ENCODE measurements at regions of chr18 and their contacts with region 1.

Region 1: DNA sequence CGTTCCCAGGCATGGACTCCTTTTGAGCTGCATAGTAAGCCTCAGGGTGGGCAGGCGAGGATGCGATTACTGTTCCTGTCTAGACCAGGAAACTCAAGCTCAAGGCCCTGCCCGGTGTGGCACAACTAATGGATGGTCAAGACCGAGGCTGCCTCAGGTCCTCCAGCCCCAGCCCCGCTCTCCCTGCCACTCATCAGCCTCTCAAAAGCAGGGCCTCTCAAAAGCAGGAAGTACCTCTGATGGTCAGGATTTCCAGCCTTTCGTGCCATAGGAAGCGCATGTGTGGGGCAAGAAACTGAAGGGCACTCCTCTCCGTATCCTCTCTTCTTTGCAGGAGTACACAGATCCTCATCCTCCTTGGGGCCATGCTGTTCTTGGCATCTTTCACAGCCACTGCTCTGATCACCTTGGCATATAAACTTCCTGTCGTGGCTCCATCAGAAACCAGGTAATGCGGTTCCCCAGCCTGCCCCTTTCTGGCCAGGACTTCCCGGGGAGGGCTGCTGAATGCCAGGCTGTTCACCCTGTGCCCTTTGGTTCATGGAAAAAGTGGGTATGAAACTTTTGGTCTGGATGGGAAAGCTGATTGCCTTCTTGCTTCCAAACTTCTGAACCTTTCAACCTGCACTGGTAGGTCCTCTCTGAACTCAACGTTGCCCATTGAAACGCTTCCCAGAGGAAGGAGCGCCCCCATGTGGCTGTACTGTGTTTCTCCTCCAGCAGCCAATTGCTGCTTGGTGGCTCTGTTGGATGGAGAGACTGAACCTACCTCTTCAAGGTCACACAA is 82.8 kb upstream of the SEC11C start:
- DNase-seq: peak; percentile 78 to 85 (median 80)
- ATAC-seq: peak in 3 of 4 donors; percentile 68 to 74 (median 69)
- H3K4me3 ChIP-seq: no peak overlapping the region
- H3K27ac ChIP-seq: no peak overlapping the region
- H3K4me1 ChIP-seq: peaks cover 0 to 26% (median 6%) of the 10 kb centered on the region in 12 donors
- H3K27me3 ChIP-seq: no peaks in the 10 kb centered on the region
- CTCF ChIP-seq: peak in 11 of 12 donors; percentile 58 to 93 (median 80)
- POLR2A ChIP-seq: no peak

Region 2: GRCh38 chr18:58788971-58789875 is 267.7 kb before region 1 on chr18:
- intact Hi-C with region 1: loop called in 3 of 10 experiments (anchors 2 to 5 kb)
- DNase-seq: peak; percentile 68 to 77 (median 69)
- ATAC-seq: peak in 3 of 4 donors; percentile 67 to 77 (median 68)
- H3K4me3 ChIP-seq: no peak overlapping the region
- H3K27ac ChIP-seq: peak overlapping the region; percentile 5 to 76 (median 72)
- H3K4me1 ChIP-seq: peaks cover 0 to 44% (median 27%) of the 10 kb centered on the region in 12 donors
- H3K27me3 ChIP-seq: no peaks in the 10 kb centered on the region
- CTCF ChIP-seq: no peak
- POLR2A ChIP-seq: no peak

Region 3: GRCh38 chr18:58864146-58865032 is 192.5 kb before region 1 on chr18 and contains the start of gene ZNF532:
- intact Hi-C with region 1: loop called in 2 of 10 experiments (anchors 10 kb)
- DNase-seq: peak in 3 of 5 donors; percentile 51 to 60 (median 57)
- ATAC-seq: peak; percentile 46 to 73 (median 56)
- H3K4me3 ChIP-seq: peak within 1 kb of the TSS; percentile 29 to 76 (median 55)
- H3K27ac ChIP-seq: peak within 1 kb of the TSS; percentile 92 to 100 (median 98)
- H3K4me1 ChIP-seq: peaks cover 21 to 93% (median 77%) of the 10 kb centered on the region in 12 donors
- H3K27me3 ChIP-seq: no peaks in the 10 kb centered on the region
- CTCF ChIP-seq: no peak
- POLR2A ChIP-seq: no peak
- total RNA-seq, gene ZNF532: 50.7 to 84.4 (median 70.9) TPM

Region 4: DNA sequence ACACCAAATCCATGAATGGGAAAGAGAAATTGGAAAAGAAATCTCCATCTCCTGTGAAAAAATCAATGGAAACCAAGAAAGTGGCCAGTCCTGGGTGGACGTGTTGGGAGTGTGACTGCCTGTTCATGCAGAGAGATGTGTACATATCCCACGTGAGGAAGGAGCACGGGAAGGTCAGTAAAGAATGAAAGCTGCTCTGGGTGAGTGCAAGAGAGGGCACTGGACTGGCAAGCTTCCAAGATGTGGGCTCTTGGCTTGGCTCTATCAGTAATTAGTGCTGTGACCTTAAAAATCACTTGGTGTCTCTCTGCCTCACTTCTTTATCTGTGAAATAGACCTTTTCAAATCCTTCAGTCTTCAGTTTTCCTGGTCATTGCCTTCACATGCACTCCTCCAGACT is 103.3 kb before region 1 on chr18:
- intact Hi-C with region 1: loop called in 1 of 10 experiments (anchors 5 kb)
- DNase-seq: peak in 4 of 5 donors; percentile 70 to 83 (median 76)
- ATAC-seq: peak; percentile 88 to 95 (median 94)
- H3K4me3 ChIP-seq: no peak overlapping the region
- H3K27ac ChIP-seq: peak overlapping the region in 5 of 12 donors; percentile 8 to 68 (median 43)
- H3K4me1 ChIP-seq: peaks cover 0 to 34% (median 9%) of the 10 kb centered on the region in 12 donors
- H3K27me3 ChIP-seq: no peaks in the 10 kb centered on the region
- CTCF ChIP-seq: no peak
- POLR2A ChIP-seq: no peak

Region 5: GRCh38 chr18:58998401-58999203 is 58.3 kb before region 1 on chr18:
- intact Hi-C with region 1: loop called in 6 of 10 experiments (anchors 5 to 10 kb)
- DNase-seq: peak; percentile 70 to 80 (median 72)
- ATAC-seq: peak; percentile 87 to 89 (median 88)
- H3K4me3 ChIP-seq: peak overlapping the region in 8 of 12 donors; percentile 10 to 36 (median 26)
- H3K27ac ChIP-seq: peak overlapping the region; percentile 81 to 95 (median 88)
- H3K4me1 ChIP-seq: peaks cover 11 to 62% (median 46%) of the 10 kb centered on the region in 12 donors
- H3K27me3 ChIP-seq: no peaks in the 10 kb centered on the region
- CTCF ChIP-seq: peak in 1 of 12 donors; percentile 20
- POLR2A ChIP-seq: peak in 1 of 2 donors; percentile 31

Measured in heart left ventricle (tissue), 16 donors.